ENCODE measurements at regions of chr18 and their contacts with region 1.

Region 1: DNA sequence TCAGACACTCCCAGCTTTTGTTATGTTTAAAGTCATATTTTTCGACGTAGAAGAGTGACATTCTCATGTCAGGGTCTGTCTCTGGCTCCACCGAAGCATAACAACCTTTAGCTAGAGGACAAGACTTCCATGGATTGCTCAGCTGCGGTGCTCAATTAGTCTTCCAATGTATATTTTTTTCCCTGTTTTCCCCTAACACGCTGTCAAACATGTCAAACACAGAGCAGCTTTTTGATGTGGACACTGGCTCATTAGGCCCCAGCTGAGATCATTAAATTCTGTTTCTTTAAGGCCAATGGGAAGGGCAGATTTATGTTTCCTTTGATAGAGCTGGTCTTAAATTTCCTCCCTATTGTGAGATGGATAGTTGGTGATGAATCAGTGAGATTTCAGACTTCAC is 525.4 kb downstream of the PIK3C3 start:
- DNase-seq: no peak
- ATAC-seq: no peak
- H3K4me3 ChIP-seq: no peak overlapping the region
- H3K27ac ChIP-seq: no peak overlapping the region
- H3K4me1 ChIP-seq: no peaks in the 10 kb centered on the region
- H3K27me3 ChIP-seq: no peaks in the 10 kb centered on the region
- CTCF ChIP-seq: no peak
- POLR2A ChIP-seq: no peak

Region 2: DNA sequence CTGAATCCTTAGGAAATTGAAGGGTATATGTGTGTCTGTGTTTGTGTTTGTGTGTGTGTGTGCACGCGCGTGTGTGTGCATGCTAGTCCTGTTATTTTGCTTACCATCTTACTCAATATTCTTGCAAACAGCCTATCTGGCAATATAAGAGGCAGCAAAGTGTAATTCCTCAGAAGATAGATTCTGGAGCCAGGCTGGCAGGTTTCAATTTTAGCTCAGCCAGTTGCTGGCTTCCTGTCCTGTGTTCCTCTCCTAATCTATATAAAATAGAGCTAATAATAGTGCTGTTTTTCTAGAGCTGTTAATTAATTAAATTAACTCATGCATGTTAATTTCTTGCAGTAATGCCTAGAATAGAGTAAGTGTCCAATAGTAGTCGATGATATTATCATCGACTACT is 269.2 kb before region 1 on chr18:
- intact Hi-C with region 1: loop called in 1 of 10 experiments (anchors 10 kb)
- DNase-seq: no peak
- ATAC-seq: no peak
- H3K4me3 ChIP-seq: no peak overlapping the region
- H3K27ac ChIP-seq: no peak overlapping the region
- H3K4me1 ChIP-seq: peaks cover 0 to 8% (median 0%) of the 10 kb centered on the region in 12 donors
- H3K27me3 ChIP-seq: no peaks in the 10 kb centered on the region
- CTCF ChIP-seq: no peak
- POLR2A ChIP-seq: no peak

Region 3: GRCh38 chr18:42425025-42425424 is 55.4 kb before region 1 on chr18:
- intact Hi-C with region 1: no loop called
- DNase-seq: no peak
- ATAC-seq: no peak
- H3K4me3 ChIP-seq: no peak overlapping the region
- H3K27ac ChIP-seq: no peak overlapping the region
- H3K4me1 ChIP-seq: no peaks in the 10 kb centered on the region
- H3K27me3 ChIP-seq: no peaks in the 10 kb centered on the region
- CTCF ChIP-seq: no peak
- POLR2A ChIP-seq: no peak

Region 4: GRCh38 chr18:42533009-42533575 is 52.7 kb after region 1 on chr18:
- intact Hi-C with region 1: loop called in 1 of 10 experiments (anchors 10 kb)
- DNase-seq: no peak
- ATAC-seq: no peak
- H3K4me3 ChIP-seq: no peak overlapping the region
- H3K27ac ChIP-seq: no peak overlapping the region
- H3K4me1 ChIP-seq: peaks cover 0 to 8% (median 0%) of the 10 kb centered on the region in 12 donors
- H3K27me3 ChIP-seq: no peaks in the 10 kb centered on the region
- CTCF ChIP-seq: no peak
- POLR2A ChIP-seq: no peak

Region 5: DNA sequence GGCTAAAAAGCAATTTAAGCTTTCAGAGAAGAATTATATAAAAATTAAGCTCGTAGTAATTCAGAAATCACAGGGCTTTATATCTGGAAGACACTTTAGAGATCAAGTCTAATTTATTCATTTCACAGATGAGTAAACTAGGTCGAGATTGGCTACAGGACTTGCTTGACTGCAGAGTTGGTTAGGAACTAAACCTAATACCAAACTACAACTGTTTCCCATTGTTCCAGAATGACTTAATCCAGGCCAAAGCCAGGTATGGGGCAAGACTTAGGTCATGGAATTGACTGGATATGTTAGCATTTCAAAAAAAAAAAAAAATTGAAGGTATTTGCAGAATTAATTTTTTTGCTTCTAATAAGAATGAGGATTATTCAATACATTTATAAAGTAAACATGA is 488.9 kb after region 1 on chr18:
- intact Hi-C with region 1: no loop called
- DNase-seq: no peak
- ATAC-seq: no peak
- H3K4me3 ChIP-seq: no peak overlapping the region
- H3K27ac ChIP-seq: no peak overlapping the region
- H3K4me1 ChIP-seq: no peaks in the 10 kb centered on the region
- H3K27me3 ChIP-seq: no peaks in the 10 kb centered on the region
- CTCF ChIP-seq: no peak
- POLR2A ChIP-seq: no peak

Measured in heart left ventricle (tissue), 16 donors.